Activated CD4-positive, alpha-beta T cell treated with anti-CD3 and anti-CD28 coated beads, Interleukin-2, amount 10 ng/mL, durations not matched to agents 7 days and 5 days (primary cell): ENCODE measurements at regions of chr11 and their contacts with region 1.

Region 1: DNA sequence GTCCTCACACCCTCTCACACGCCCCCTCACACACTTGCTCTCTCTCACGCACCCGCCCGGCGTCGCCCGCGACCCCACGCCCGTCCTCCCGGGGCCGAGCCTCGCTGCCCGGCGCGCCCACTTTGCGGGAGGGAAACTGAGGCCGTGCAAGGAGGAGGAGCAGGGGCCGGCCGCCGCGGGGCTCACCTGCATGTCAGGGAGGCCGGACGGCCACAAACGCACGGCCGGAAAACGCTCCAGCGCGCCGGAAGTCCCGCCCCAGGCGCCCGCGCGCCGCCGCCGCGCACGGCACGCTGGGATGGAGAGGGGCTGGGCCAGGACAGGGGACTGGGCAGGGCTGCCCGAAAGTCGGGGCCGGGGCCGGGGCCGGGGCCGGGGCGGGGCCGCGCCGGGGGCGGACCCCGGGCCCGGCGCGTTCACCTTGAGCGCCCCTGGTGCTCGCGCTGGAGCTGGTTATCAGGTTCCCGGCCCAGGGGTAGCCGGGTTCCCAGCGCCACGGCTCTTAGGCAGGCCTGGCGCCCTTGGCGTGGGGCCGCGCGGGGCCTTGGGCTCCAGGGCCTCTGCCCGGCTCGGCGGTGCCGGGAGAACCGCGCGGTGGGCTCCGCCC is at the start of gene CHID1:
- DNase-seq: peak; percentile 85
- H3K4me3 Mint-ChIP-seq: peak within 1 kb of the TSS; percentile 88
- H3K27ac Mint-ChIP-seq: peak within 1 kb of the TSS; percentile 87
- H3K4me1 Mint-ChIP-seq: peaks cover 24% of the 10 kb centered on the region
- H3K27me3 Mint-ChIP-seq: no peaks in the 10 kb centered on the region
- total RNA-seq, gene CHID1: 42.6 to 45.5 TPM

Region 2: DNA sequence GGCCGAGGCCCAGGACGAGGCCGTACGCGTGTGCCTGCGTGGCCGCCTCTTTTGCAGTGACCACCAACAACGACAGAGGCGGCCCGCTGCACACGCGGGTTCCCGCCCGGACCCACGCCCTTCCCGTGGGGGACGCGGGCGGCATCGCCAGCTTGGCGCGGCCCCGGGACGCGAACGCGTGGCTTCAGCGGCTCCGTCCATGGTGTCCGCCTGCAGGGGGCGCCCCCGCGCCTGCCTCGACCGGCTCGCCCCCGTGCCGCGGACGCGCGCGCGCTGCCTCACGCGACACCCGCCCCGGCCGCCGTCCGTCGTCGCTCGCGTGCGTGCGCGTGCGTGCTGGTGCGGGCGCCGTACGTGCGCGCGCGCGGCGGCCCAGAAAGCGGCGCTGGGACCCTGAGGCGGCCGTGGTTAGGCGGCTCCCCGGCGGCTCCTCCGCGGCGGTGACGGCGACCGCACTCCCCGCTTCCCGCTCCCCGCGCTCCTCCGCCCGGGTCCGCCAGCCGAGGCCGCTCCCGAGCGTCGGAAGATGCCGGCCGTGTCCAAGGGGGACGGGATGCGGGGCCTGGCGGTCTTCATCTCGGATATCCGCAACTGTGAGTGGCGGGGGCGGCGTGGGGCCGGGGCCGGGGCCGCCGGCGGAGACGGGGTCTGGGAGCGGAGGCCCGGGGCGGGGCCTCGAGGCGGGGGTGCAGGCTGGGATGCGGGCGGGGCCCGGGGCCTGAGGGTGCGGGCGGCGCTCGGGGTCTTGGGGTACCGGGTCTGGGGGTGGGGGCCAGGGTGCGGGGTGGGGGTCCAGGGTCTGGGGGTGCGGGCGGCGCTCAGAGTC is 15.0 kb after region 1 on chr11 and contains the start of gene AP2A2:
- CTCF ChIA-PET with region 1: interaction called, 13 read pairs
- POLR2A ChIA-PET with region 1: no interaction called
- DNase-seq: peak; percentile 86
- H3K4me3 Mint-ChIP-seq: peak within 1 kb of the TSS; percentile 80
- H3K27ac Mint-ChIP-seq: peak within 1 kb of the TSS; percentile 80
- H3K4me1 Mint-ChIP-seq: peaks cover 31% of the 10 kb centered on the region
- H3K27me3 Mint-ChIP-seq: no peaks in the 10 kb centered on the region
- total RNA-seq, gene AP2A2: 60.1 to 66.7 TPM